ENCODE measurements at regions of chr1 and their contacts with region 1.

Region 1: GRCh38 chr1:160755911-160756848 is 17.1 kb downstream of the SLAMF7 start:
- DNase-seq: no peak
- ATAC-seq: peak; percentile 82
- H3K4me3 Mint-ChIP-seq: peak overlapping the region; percentile 60
- H3K27ac Mint-ChIP-seq: peak overlapping the region; percentile 95
- H3K4me1 Mint-ChIP-seq: peaks cover 47% of the 10 kb centered on the region
- H3K27me3 Mint-ChIP-seq: no peaks in the 10 kb centered on the region

Region 2: DNA sequence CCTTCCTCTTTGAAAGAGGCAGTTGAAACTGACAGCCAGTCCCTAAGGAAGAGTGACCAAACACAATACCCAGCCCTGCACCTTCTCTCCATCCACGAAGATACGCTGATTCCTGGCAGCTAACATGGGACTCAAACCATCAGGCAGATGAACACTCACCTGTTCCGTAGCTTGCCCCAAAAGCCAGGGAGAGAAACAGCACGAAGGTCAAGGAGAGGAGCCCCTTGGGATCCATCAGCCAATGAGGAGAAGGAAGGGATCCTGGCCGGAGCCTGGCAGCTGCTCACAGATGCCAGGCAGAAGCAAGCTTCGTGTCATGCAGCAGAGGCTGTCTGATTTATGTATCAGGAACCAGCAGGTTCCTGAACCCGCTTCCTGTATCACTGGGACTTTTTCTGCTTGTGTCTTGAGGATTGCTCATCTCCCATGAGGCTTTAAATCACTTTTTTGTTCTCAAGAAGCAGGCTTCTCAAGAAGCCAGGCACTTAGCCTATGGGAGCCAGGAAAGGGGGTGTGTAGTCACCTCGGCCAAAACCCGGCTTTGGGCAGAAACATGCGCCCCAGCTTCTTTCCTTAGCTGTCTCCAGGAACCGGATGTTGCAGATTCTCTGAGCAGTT is 109.4 kb before region 1 on chr1 and contains the start of gene SLAMF1:
- POLR2A ChIA-PET with region 1: no interaction called
- DNase-seq: no peak
- ATAC-seq: peak; percentile 58
- H3K4me3 Mint-ChIP-seq: peak within 1 kb of the TSS; percentile 96
- H3K27ac Mint-ChIP-seq: peak within 1 kb of the TSS; percentile 93
- H3K4me1 Mint-ChIP-seq: peaks cover 66% of the 10 kb centered on the region
- H3K27me3 Mint-ChIP-seq: no peaks in the 10 kb centered on the region
- total RNA-seq, gene SLAMF1: 41.3 to 42.6 TPM

Region 3: DNA sequence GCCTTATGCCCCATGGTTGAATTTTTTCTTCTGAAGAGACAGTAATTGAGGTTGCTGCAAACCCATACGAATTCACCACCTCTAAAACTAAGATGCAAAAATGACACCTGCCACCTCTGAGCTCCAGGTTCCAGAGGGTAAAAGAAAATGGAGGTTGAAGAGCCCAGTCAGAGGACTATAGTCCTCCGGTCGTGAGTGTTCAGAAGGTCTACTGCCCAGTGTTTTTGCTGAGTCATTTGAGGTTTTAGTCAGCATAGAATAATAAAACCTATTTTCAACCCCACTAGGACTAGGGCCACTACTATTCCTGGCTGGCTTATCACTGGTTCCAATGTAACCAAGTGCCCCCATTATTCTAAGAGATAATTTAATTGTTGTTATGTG is 30.1 kb before region 1 on chr1:
- POLR2A ChIA-PET with region 1: no interaction called
- DNase-seq: no peak
- ATAC-seq: no peak
- H3K4me3 Mint-ChIP-seq: no peak overlapping the region
- H3K27ac Mint-ChIP-seq: no peak overlapping the region
- H3K4me1 Mint-ChIP-seq: peaks cover 22% of the 10 kb centered on the region
- H3K27me3 Mint-ChIP-seq: no peaks in the 10 kb centered on the region

Region 4: DNA sequence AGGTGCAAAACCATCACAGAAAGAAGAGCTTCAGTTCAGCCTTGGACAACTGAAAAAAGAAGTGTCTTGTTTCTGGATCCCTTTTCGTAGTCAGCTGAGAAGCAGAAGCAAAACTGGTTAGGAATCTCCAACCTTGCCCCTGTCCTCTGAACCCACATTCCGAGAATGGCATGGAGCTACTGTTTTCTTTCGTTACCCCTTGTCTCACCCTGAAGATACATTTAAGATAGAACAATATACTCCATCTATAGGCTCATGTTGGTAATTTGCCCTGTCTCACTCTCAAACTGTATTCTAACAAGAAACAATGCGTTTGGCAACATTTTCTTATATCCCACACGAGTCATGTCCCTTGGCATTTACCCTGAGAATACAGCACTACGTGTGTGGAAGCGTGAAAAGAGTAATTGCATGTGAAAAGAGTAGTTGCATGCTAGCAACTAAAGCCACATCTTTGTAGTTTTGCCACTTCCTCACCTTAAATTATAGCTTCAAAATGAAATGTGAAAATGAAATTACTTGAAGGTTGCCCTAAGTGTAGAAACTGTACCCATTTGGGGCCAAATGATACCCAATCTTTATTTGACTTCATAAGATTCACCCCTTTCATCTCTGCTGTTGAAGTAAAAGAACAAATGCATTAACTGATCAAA is 11.9 kb before region 1 on chr1:
- POLR2A ChIA-PET with region 1: interaction called, 24 read pairs
- DNase-seq: no peak
- ATAC-seq: peak; percentile 74
- H3K4me3 Mint-ChIP-seq: peak overlapping the region; percentile 79
- H3K27ac Mint-ChIP-seq: peak overlapping the region; percentile 85
- H3K4me1 Mint-ChIP-seq: peaks cover 88% of the 10 kb centered on the region
- H3K27me3 Mint-ChIP-seq: no peaks in the 10 kb centered on the region

Region 5: DNA sequence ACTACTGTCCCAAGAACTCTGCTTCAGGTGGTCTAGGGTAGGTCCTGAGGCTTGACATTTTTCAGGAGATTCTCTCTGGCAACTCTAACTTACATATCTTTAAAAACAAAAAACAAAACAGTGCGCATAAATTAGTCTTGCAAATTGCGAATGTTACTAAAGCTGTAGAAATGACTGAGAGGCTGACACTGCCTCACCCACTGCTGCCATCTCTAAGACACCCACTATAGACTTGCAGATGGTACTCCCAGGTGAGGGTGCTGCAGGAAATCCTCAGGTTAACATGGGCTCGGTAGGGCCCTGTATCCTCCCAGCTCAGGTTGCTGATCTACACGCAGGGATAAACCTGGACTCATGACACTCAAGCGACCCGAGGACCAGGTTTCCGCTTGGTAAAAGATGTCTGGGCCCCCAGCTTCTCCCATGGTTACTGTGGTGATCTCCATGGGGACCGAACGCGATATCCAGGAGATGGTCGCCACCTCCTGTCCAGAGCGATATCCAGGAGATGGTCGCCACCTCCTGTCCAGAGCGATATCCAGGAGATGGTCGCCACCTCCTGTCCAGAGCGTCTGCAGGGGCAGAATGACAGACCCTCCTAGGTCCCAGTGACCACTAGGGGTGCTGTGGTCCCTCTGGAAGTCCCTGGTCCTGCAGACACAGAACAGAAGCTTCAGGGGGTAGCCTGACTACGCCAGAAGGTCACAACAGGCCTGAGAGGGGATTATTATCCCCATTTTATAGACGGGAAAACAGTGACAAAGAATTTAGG is 23.6 kb after region 1 on chr1:
- POLR2A ChIA-PET with region 1: no interaction called
- DNase-seq: no peak
- ATAC-seq: peak; percentile 39
- H3K4me3 Mint-ChIP-seq: no peak overlapping the region
- H3K27ac Mint-ChIP-seq: no peak overlapping the region
- H3K4me1 Mint-ChIP-seq: peaks cover 32% of the 10 kb centered on the region
- H3K27me3 Mint-ChIP-seq: peaks cover 5% of the 10 kb centered on the region

Region 6: GRCh38 chr1:160877221-160877620 is 121.0 kb after region 1 on chr1:
- POLR2A ChIA-PET with region 1: no interaction called
- DNase-seq: no peak
- ATAC-seq: peak; percentile 88
- H3K4me3 Mint-ChIP-seq: no peak overlapping the region
- H3K27ac Mint-ChIP-seq: peak overlapping the region; percentile 6
- H3K4me1 Mint-ChIP-seq: peaks cover 22% of the 10 kb centered on the region
- H3K27me3 Mint-ChIP-seq: peaks cover 6% of the 10 kb centered on the region